ENCODE measurements at regions of chr2 and their contacts with region 1.

Region 1: GRCh38 chr2:39008665-39009064 is 112.2 kb downstream of the SOS1 start:
- DNase-seq: peak in 1 of 9 donors; percentile 32
- ATAC-seq: no peak
- H3K4me3 ChIP-seq: no peak overlapping the region
- H3K4me3 Mint-ChIP-seq: no peak overlapping the region
- H3K27ac ChIP-seq: no peak overlapping the region
- H3K27ac Mint-ChIP-seq: peak overlapping the region in 3 of 9 donors; percentile 9 to 62 (median 31)
- H3K4me1 ChIP-seq: no peaks in the 10 kb centered on the region
- H3K4me1 Mint-ChIP-seq: peaks cover 0 to 26% (median 0%) of the 10 kb centered on the region in 7 donors
- H3K27me3 ChIP-seq: no peaks in the 10 kb centered on the region
- H3K27me3 Mint-ChIP-seq: no peaks in the 10 kb centered on the region

Region 2: GRCh38 chr2:39050109-39050508 is 41.4 kb after region 1 on chr2:
- CTCF ChIA-PET with region 1: no interaction called
- POLR2A ChIA-PET with region 1: no interaction called
- intact Hi-C with region 1: loop called in 1 of 2 experiments (anchors 5 kb)
- DNase-seq: no peak
- ATAC-seq: no peak
- H3K4me3 ChIP-seq: no peak overlapping the region
- H3K4me3 Mint-ChIP-seq: no peak overlapping the region
- H3K27ac ChIP-seq: no peak overlapping the region
- H3K27ac Mint-ChIP-seq: no peak overlapping the region
- H3K4me1 ChIP-seq: no peaks in the 10 kb centered on the region
- H3K4me1 Mint-ChIP-seq: peaks cover 0 to 21% (median 0%) of the 10 kb centered on the region in 7 donors
- H3K27me3 ChIP-seq: no peaks in the 10 kb centered on the region
- H3K27me3 Mint-ChIP-seq: no peaks in the 10 kb centered on the region